Aorta (tissue), 5 donors: ENCODE measurements at regions of chr3 and their contacts with region 1.

Region 1: GRCh38 chr3:25594007-25594502 is 70.7 kb downstream of the TOP2B start:
- DNase-seq: no peak
- ATAC-seq: peak; percentile 69
- H3K4me3 ChIP-seq: no peak overlapping the region
- H3K27ac ChIP-seq: no peak overlapping the region
- H3K4me1 ChIP-seq: peaks cover 0 to 4% of the 10 kb centered on the region in 2 donors
- H3K27me3 ChIP-seq: no peaks in the 10 kb centered on the region

Region 2: GRCh38 chr3:24773798-24774197 is 820.3 kb before region 1 on chr3:
- intact Hi-C with region 1: loop called (anchors 2 kb)
- DNase-seq: peak; percentile 53 to 79
- ATAC-seq: peak; percentile 72
- H3K4me3 ChIP-seq: no peak overlapping the region
- H3K27ac ChIP-seq: no peak overlapping the region
- H3K4me1 ChIP-seq: no peaks in the 10 kb centered on the region
- H3K27me3 ChIP-seq: no peaks in the 10 kb centered on the region

Region 3: GRCh38 chr3:24963762-24964625 is 630.1 kb before region 1 on chr3:
- intact Hi-C with region 1: loop called (anchors 2 to 5 kb)
- DNase-seq: no peak
- ATAC-seq: no peak
- H3K4me3 ChIP-seq: no peak overlapping the region
- H3K27ac ChIP-seq: no peak overlapping the region
- H3K4me1 ChIP-seq: no peaks in the 10 kb centered on the region
- H3K27me3 ChIP-seq: no peaks in the 10 kb centered on the region

Region 4: DNA sequence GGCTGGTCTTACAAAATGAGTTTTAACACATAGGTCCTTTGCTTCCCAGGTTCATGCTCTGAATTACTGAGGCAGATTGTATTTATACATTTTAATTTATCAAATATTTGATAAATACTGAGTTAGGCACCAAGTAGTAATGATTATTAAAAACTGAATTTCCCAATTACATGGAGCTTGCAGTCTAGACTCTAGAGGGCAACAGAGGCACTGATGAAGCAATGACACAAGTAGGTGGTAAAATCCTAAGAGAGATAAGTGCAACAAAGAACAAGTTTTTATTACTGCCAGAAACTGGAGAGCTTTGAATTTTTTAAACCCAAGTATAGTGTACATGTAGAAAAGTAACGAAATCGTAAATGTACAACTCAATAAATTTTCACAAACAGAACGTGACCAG is 572.2 kb before region 1 on chr3:
- intact Hi-C with region 1: loop called (anchors 5 kb)
- DNase-seq: no peak
- ATAC-seq: no peak
- H3K4me3 ChIP-seq: no peak overlapping the region
- H3K27ac ChIP-seq: no peak overlapping the region
- H3K4me1 ChIP-seq: no peaks in the 10 kb centered on the region
- H3K27me3 ChIP-seq: no peaks in the 10 kb centered on the region

Region 5: DNA sequence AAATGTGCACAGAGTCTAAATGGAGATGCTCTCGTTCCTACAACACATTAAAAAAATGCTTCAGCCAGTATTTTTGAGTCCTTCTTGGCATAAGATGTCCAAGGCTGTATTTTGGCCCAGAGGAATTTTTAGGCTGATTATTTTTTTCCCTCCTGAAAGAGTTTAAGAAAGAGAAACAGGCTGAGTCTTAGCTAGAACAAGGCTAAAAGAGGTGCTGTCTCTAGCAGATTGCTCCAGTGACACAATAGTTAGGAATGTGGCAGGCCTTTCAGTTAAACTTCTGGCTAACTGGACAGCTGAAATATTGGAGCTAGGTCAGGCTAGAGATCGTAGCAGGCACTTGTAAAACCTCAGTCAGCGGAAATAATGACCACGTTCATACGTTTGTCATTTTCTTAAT is 437.4 kb before region 1 on chr3:
- intact Hi-C with region 1: loop called in 1 of 2 experiments (anchors 5 kb)
- DNase-seq: no peak
- ATAC-seq: peak; percentile 85
- H3K4me3 ChIP-seq: no peak overlapping the region
- H3K27ac ChIP-seq: no peak overlapping the region
- H3K4me1 ChIP-seq: peaks cover 1 to 2% of the 10 kb centered on the region in 2 donors
- H3K27me3 ChIP-seq: no peaks in the 10 kb centered on the region

Region 6: DNA sequence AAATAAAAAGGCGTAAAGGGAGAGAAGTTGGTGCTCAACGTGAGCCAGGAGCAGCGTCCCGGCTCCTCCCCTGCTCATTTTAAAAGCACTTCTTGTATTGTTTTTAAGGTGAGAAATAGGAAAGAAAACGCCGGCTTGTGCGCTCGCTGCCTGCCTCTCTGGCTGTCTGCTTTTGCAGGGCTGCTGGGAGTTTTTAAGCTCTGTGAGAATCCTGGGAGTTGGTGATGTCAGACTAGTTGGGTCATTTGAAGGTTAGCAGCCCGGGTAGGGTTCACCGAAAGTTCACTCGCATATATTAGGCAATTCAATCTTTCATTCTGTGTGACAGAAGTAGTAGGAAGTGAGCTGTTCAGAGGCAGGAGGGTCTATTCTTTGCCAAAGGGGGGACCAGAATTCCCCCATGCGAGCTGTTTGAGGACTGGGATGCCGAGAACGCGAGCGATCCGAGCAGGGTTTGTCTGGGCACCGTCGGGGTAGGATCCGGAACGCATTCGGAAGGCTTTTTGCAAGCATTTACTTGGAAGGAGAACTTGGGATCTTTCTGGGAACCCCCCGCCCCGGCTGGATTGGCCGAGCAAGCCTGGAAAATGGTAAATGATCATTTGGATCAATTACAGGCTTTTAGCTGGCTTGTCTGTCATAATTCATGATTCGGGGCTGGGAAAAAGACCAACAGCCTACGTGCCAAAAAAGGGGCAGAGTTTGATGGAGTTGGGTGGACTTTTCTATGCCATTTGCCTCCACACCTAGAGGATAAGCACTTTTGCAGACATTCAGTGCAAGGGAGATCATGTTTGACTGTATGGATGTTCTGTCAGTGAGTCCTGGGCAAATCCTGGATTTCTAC is 165.9 kb before region 1 on chr3 and contains the start of gene RARB:
- intact Hi-C with region 1: loop called (anchors 5 to 10 kb)
- DNase-seq: peak; percentile 68 to 83
- ATAC-seq: peak; percentile 93
- H3K4me3 ChIP-seq: peak within 1 kb of the TSS; percentile 74 to 88
- H3K27ac ChIP-seq: peak within 1 kb of the TSS; percentile 59 to 79
- H3K4me1 ChIP-seq: no peaks in the 10 kb centered on the region
- H3K27me3 ChIP-seq: no peaks in the 10 kb centered on the region
- total RNA-seq, gene RARB: 5.9 to 7.0 TPM